Right ventricle myocardium inferior (tissue), 1 donor: ENCODE measurements at regions of chr6 and their contacts with region 1.

Region 1: DNA sequence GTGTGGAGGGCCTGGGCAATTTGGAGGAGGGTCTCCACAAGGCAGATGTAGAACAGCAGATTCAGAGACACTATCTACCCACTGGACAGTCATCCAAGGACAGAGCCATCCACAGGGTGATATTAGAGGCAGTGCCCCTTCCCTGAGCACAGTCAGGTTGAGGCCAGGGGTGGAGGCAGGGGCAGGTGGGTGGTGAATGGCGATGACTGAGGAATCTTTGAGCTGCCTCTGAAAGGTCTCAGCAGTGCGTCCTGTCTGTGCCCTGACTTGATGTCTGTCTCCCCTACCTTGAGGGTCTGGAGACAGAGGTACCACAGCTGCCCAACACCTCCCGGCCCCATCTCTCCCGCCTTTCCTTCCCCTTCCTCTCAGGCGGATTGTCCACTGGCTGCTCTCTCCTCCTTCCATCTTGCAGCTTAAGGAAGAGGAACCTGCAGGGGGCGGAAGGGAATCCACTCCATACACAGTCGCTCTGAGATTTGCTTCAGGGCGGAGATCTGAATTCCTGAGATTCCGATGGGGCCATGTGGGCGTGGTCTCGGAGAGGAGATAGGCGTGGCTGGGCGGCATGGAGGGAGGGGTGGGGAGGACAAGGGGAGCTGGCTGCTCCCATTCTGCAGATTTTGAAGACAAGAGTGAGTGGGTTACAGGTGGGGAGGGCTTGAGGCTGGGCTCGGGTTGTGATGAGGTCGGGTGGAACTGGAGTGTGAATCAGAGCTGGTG is 1.7 kb downstream of the MUCL3 start:
- DNase-seq: peak; percentile 85
- ATAC-seq: peak; percentile 79

Region 2: GRCh38 chr6:31042806-31043205 is 100.3 kb after region 1 on chr6:
- intact Hi-C with region 1: loop called (anchors 5 kb)
- DNase-seq: no peak
- ATAC-seq: peak; percentile 57

Region 3: GRCh38 chr6:31453259-31453658 is 510.8 kb after region 1 on chr6:
- intact Hi-C with region 1: no loop called
- DNase-seq: no peak
- ATAC-seq: no peak